Spleen (tissue), 13 donors: ENCODE measurements at regions of chr12 and their contacts with region 1.

Region 1: DNA sequence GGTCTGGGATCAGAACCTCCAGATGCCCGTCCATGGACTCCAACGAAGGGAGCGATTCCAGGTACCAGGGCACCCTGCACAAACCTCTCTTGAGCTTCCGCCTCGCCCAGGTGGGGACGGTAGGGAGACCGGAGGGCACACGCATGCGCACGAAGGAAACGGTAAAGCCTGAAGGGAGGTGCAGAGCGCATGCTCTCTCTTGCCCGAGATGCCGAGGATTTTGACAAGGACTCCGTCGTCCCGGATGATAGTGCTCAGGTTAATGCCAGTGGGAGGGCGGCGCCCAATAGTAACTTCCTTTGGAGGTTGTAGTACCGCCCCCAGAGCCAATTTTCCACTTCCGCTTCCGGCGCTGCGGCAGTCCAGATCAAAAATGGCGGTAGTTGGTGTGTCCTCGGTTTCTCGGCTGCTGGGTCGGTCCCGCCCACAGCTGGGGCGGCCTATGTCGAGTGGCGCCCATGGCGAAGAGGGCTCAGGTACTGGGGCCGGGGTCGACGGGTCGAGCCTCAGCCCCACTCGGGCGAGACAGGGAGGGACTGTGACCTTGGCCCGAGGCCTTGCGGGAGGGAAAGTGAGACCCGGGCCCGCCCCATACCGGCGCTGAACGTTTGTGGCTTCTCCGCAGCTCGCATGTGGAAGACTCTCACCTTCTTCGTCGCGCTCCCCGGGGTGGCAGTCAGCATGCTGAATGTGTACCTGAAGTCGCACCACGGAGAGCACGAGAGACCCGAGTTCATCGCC is at the start of gene COX6A1:
- DNase-seq: peak; percentile 98
- H3K4me3 ChIP-seq: peak within 1 kb of the TSS; percentile 78 to 98 (median 88)
- H3K27ac ChIP-seq: peak within 1 kb of the TSS; percentile 79 to 93 (median 90)
- H3K4me1 ChIP-seq: peaks cover 17 to 42% (median 24%) of the 10 kb centered on the region in 6 donors
- H3K27me3 ChIP-seq: peaks cover 0 to 8% (median 0%) of the 10 kb centered on the region in 7 donors
- CTCF ChIP-seq: peak in 5 of 11 experiments; percentile 16 to 45 (median 36)
- POLR2A ChIP-seq: no peak
- total RNA-seq, gene COX6A1: 182 to 427 (median 190) TPM

Region 2: GRCh38 chr12:120301962-120302815 is 135.7 kb before region 1 on chr12 and contains the start of gene SIRT4:
- intact Hi-C with region 1: no loop called
- DNase-seq: peak; percentile 93
- H3K4me3 ChIP-seq: peak within 1 kb of the TSS; percentile 59 to 81 (median 69)
- H3K27ac ChIP-seq: peak within 1 kb of the TSS; percentile 23 to 81 (median 70)
- H3K4me1 ChIP-seq: peaks cover 0 to 22% (median 9%) of the 10 kb centered on the region in 6 donors
- H3K27me3 ChIP-seq: no peaks in the 10 kb centered on the region
- CTCF ChIP-seq: peak; percentile 17 to 85 (median 83)
- POLR2A ChIP-seq: peak in 1 of 3 donors; percentile 8
- total RNA-seq, gene SIRT4: 0.66 to 2.6 (median 1.7) TPM

Region 3: GRCh38 chr12:120321382-120322202 is 116.3 kb before region 1 on chr12:
- intact Hi-C with region 1: loop called (anchors 10 kb)
- DNase-seq: no peak
- H3K4me3 ChIP-seq: no peak overlapping the region
- H3K27ac ChIP-seq: no peak overlapping the region
- H3K4me1 ChIP-seq: peaks cover 5 to 27% (median 20%) of the 10 kb centered on the region in 6 donors
- H3K27me3 ChIP-seq: no peaks in the 10 kb centered on the region
- CTCF ChIP-seq: no peak
- POLR2A ChIP-seq: no peak